ENCODE measurements at regions of chr14 and their contacts with region 1.

Region 1: DNA sequence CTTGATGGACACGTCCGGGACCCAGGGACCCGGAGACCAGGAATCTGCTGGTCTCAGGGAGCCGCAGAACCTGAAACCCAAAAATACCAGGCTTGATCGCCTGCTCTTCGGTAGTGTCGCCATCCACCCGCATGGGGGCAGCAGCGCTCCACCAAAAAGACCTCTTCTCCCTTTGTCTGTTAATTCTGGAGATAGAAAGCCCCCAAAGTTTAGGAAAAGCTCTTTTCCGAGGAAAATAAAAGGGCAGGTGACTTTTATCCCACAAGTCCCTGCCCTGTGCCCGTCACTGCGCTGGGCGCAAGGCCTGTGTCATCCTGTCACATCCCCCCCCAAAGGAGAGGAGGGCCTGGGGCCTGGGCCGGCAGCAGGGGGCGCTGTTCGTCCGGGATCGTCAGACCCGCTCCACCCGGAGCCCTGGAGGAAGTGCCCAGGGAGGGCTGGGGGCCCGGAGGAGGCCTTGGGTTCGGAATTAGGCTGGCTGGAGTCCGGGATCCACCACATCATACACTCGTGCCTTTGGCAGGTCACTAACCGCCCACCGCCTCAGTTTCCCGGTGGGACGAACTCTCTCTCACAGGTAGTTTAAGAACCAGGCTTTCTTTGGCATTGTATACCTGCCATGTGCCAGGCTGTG is 31.9 kb downstream of the DAD1 start:
- DNase-seq: peak; percentile 87 to 96 (median 91)
- H3K4me3 ChIP-seq: peak overlapping the region; percentile 80 to 85
- H3K4me3 Mint-ChIP-seq: peak overlapping the region; percentile 77 to 96 (median 88)
- H3K27ac ChIP-seq: peak overlapping the region; percentile 97
- H3K27ac Mint-ChIP-seq: peak overlapping the region; percentile 98 to 100 (median 100)
- H3K4me1 ChIP-seq: peaks cover 97% of the 10 kb centered on the region
- H3K4me1 Mint-ChIP-seq: peaks cover 75 to 97% (median 86%) of the 10 kb centered on the region in 4 donors
- H3K27me3 ChIP-seq: no peaks in the 10 kb centered on the region
- H3K27me3 Mint-ChIP-seq: peaks cover 2 to 4% of the 10 kb centered on the region in 2 donors

Region 2: GRCh38 chr14:21846227-21846885 is 710.8 kb before region 1 on chr14:
- CTCF ChIA-PET with region 1: interaction called, 18 read pairs
- POLR2A ChIA-PET with region 1: interaction called, 49 read pairs
- intact Hi-C with region 1: loop called (anchors 2 kb)
- DNase-seq: peak; percentile 61 to 71 (median 64)
- H3K4me3 ChIP-seq: peak overlapping the region in 1 of 2 donors; percentile 39
- H3K4me3 Mint-ChIP-seq: peak overlapping the region; percentile 86 to 93 (median 90)
- H3K27ac ChIP-seq: peak overlapping the region; percentile 55
- H3K27ac Mint-ChIP-seq: peak overlapping the region; percentile 54 to 91 (median 88)
- H3K4me1 ChIP-seq: peaks cover under 1% of the 10 kb centered on the region
- H3K4me1 Mint-ChIP-seq: peaks cover 1 to 13% (median 6%) of the 10 kb centered on the region in 4 donors
- H3K27me3 ChIP-seq: no peaks in the 10 kb centered on the region
- H3K27me3 Mint-ChIP-seq: peaks cover 17 to 25% of the 10 kb centered on the region in 2 donors

Region 3: DNA sequence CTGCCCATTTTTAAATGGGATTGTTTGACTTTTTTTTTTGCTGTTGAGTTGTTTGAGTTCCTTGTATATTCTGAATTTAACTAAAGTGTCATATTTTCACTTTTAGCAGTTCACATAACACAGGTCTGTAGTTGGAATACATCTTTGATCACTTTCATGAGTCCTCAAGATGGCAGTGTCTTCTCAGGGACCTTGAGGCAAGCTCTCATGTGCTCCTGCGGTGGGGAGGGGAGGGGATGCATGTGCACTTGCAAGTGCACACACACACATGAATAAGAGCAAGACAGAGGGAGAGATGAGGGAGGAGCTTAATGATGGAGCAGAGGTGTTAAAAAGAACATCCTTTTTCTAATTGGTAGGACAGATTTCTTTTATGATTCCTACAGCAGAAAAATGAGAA is 592.1 kb before region 1 on chr14:
- CTCF ChIA-PET with region 1: interaction called, 5 read pairs
- POLR2A ChIA-PET with region 1: interaction called, 10 read pairs
- intact Hi-C with region 1: loop called (anchors 1 kb)
- DNase-seq: peak; percentile 34 to 74 (median 58)
- H3K4me3 ChIP-seq: no peak overlapping the region
- H3K4me3 Mint-ChIP-seq: peak overlapping the region; percentile 36 to 73 (median 66)
- H3K27ac ChIP-seq: no peak overlapping the region
- H3K27ac Mint-ChIP-seq: peak overlapping the region; percentile 23 to 93 (median 65)
- H3K4me1 ChIP-seq: peaks cover 21% of the 10 kb centered on the region
- H3K4me1 Mint-ChIP-seq: peaks cover 8 to 23% (median 13%) of the 10 kb centered on the region in 4 donors
- H3K27me3 ChIP-seq: no peaks in the 10 kb centered on the region
- H3K27me3 Mint-ChIP-seq: peaks cover 0 to 3% of the 10 kb centered on the region in 2 donors

Region 4: DNA sequence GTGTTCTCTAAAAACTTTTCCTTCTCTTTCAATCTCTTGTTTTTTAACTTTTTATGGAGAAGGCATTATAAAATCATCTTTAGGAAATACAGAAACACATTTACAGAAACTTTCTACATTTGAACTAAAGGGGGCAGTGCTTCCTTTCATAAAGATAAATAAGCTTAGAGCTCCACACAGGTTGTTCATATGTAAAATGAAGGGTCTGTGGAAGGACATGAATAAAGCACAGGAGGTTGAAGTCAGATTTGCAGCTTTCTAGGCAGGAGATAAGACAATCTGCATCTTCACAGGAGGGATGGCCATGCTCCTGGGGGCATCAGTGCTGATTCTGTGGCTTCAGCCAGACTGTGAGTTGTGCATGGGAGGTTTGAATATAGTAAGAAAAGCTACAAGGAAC is 394.1 kb before region 1 on chr14:
- CTCF ChIA-PET with region 1: interaction called, 4 read pairs
- POLR2A ChIA-PET with region 1: interaction called, 19 read pairs
- intact Hi-C with region 1: loop called (anchors 2 kb)
- DNase-seq: peak in 2 of 5 donors; percentile 10 to 21
- H3K4me3 ChIP-seq: no peak overlapping the region
- H3K4me3 Mint-ChIP-seq: peak overlapping the region; percentile 77 to 89 (median 86)
- H3K27ac ChIP-seq: no peak overlapping the region
- H3K27ac Mint-ChIP-seq: peak overlapping the region; percentile 35 to 89 (median 81)
- H3K4me1 ChIP-seq: no peaks in the 10 kb centered on the region
- H3K4me1 Mint-ChIP-seq: peaks cover 0 to 12% (median 3%) of the 10 kb centered on the region in 4 donors
- H3K27me3 ChIP-seq: no peaks in the 10 kb centered on the region
- H3K27me3 Mint-ChIP-seq: no peaks in the 10 kb centered on the region

Region 5: DNA sequence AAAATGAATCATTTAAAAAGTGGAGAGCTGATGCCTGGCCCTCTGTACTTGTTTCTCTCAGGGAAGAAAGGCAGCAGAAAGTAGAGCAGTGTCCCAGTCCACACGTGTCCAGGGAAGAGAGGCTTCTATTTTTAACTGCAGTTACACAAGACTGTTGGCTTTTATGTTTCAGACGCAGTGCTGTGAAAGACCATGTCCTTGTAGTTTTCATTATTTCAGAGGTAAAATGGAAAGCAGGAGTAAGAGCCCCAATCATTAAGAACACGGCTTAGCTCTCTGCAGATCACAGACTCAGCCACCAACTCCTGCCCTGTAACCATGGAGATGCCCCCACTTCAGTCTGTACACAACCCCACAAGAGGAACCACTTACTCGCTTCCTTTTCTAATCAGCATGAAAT is 304.4 kb before region 1 on chr14:
- CTCF ChIA-PET with region 1: no interaction called
- POLR2A ChIA-PET with region 1: no interaction called
- intact Hi-C with region 1: no loop called
- DNase-seq: no peak
- H3K4me3 ChIP-seq: no peak overlapping the region
- H3K4me3 Mint-ChIP-seq: no peak overlapping the region
- H3K27ac ChIP-seq: no peak overlapping the region
- H3K27ac Mint-ChIP-seq: peak overlapping the region in 1 of 7 donors; percentile 48
- H3K4me1 ChIP-seq: no peaks in the 10 kb centered on the region
- H3K4me1 Mint-ChIP-seq: no peaks in the 10 kb centered on the region
- H3K27me3 ChIP-seq: no peaks in the 10 kb centered on the region
- H3K27me3 Mint-ChIP-seq: no peaks in the 10 kb centered on the region

Region 6: GRCh38 chr14:22519877-22520685 is 37.0 kb before region 1 on chr14:
- CTCF ChIA-PET with region 1: interaction called, 14 read pairs
- POLR2A ChIA-PET with region 1: interaction called, 1,762 read pairs
- intact Hi-C with region 1: loop called (anchors 5 kb)
- DNase-seq: no peak
- H3K4me3 ChIP-seq: peak overlapping the region; percentile 2 to 39
- H3K4me3 Mint-ChIP-seq: peak overlapping the region; percentile 83 to 91 (median 90)
- H3K27ac ChIP-seq: peak overlapping the region; percentile 76
- H3K27ac Mint-ChIP-seq: peak overlapping the region; percentile 95 to 100 (median 95)
- H3K4me1 ChIP-seq: peaks cover 98% of the 10 kb centered on the region
- H3K4me1 Mint-ChIP-seq: peaks cover 70 to 98% (median 84%) of the 10 kb centered on the region in 4 donors
- H3K27me3 ChIP-seq: no peaks in the 10 kb centered on the region
- H3K27me3 Mint-ChIP-seq: no peaks in the 10 kb centered on the region

Region 7: GRCh38 chr14:22852940-22853767 is 296.0 kb after region 1 on chr14:
- CTCF ChIA-PET with region 1: interaction called, 30 read pairs
- POLR2A ChIA-PET with region 1: interaction called, 16 read pairs
- intact Hi-C with region 1: loop called (anchors 1 kb)
- DNase-seq: peak; percentile 81 to 86 (median 83)
- H3K4me3 ChIP-seq: peak overlapping the region; percentile 72 to 77
- H3K4me3 Mint-ChIP-seq: peak overlapping the region; percentile 84 to 89 (median 86)
- H3K27ac ChIP-seq: peak overlapping the region; percentile 34
- H3K27ac Mint-ChIP-seq: peak overlapping the region; percentile 52 to 83 (median 75)
- H3K4me1 ChIP-seq: peaks cover 13% of the 10 kb centered on the region
- H3K4me1 Mint-ChIP-seq: peaks cover 6 to 20% (median 13%) of the 10 kb centered on the region in 4 donors
- H3K27me3 ChIP-seq: no peaks in the 10 kb centered on the region
- H3K27me3 Mint-ChIP-seq: peaks cover 5 to 9% of the 10 kb centered on the region in 2 donors